ENCODE measurements at regions of chr10 and their contacts with region 1.

Region 1: DNA sequence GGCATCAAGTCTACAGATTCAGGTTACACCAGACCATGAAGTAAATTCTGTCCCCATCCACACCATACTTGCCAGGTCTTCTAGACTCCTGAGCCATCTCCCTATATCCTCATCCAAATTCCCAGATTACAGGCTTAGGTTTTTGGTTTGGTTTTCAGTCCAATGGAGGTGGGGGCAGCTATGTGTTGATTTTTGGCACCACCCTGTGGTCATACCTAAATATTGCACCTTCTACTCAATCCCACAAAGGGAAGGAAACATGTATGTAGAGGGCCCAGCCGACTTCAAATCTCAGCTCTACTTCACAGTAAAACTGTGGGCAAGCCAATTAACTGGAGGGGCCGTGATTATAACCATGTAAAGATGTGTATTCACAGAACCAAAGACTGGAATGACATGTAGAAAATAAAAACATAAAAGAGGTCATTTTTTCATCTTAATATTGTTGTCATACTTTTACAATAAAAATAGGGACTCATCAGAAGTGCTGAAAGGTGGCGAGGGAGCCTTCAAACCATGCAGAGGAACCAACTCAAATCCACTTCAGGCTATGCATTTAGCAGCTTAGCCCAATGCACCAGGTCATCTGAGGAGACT is 19.8 kb downstream of the ERCC6 start:
- DNase-seq: peak in 1 of 2 donors; percentile 19
- ATAC-seq: peak in 7 of 8 donors; percentile 46 to 82 (median 66)
- H3K4me3 ChIP-seq: no peak overlapping the region
- H3K27ac ChIP-seq: no peak overlapping the region
- H3K4me1 ChIP-seq: peaks cover 0 to 30% (median 18%) of the 10 kb centered on the region in 9 donors
- H3K27me3 ChIP-seq: no peaks in the 10 kb centered on the region
- CTCF ChIP-seq: peak; percentile 51 to 75 (median 65)

Region 2: DNA sequence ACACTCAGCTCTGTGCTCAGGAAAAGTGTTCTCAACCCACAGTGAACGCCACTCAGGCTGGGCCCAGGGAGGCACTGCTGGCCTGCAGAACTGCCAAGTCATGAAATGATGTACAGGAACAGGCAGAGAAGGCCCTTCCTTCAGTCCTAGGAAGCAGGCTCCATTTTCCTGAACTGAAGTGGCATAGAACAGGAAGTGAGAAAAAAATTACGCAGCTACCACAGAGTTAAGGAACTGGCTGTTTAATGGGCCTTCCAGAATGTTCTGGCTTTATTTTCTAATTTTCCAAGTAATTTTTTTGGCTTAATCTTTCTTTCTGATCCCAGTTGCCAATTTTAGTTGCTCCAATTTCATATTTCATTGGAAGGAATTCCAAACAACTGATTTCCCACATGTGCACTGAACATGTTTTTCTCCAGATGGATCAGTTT is 618.7 kb before region 1 on chr10:
- intact Hi-C with region 1: loop called in 1 of 10 experiments (anchors 10 kb)
- DNase-seq: no peak
- ATAC-seq: peak in 7 of 8 donors; percentile 40 to 65 (median 53)
- H3K4me3 ChIP-seq: no peak overlapping the region
- H3K27ac ChIP-seq: peak overlapping the region in 8 of 10 donors; percentile 29 to 73 (median 52)
- H3K4me1 ChIP-seq: peaks cover 0 to 19% (median 12%) of the 10 kb centered on the region in 9 donors
- H3K27me3 ChIP-seq: no peaks in the 10 kb centered on the region
- CTCF ChIP-seq: no peak

Region 3: GRCh38 chr10:49037187-49037586 is 481.9 kb before region 1 on chr10:
- intact Hi-C with region 1: no loop called
- DNase-seq: no peak
- ATAC-seq: no peak
- H3K4me3 ChIP-seq: no peak overlapping the region
- H3K27ac ChIP-seq: no peak overlapping the region
- H3K4me1 ChIP-seq: peaks cover 0 to 15% (median 0%) of the 10 kb centered on the region in 9 donors
- H3K27me3 ChIP-seq: no peaks in the 10 kb centered on the region
- CTCF ChIP-seq: no peak

Region 4: GRCh38 chr10:49726593-49726992 is 207.5 kb after region 1 on chr10:
- intact Hi-C with region 1: no loop called
- DNase-seq: no peak
- ATAC-seq: no peak
- H3K4me3 ChIP-seq: no peak overlapping the region
- H3K27ac ChIP-seq: no peak overlapping the region
- H3K4me1 ChIP-seq: no peaks in the 10 kb centered on the region
- H3K27me3 ChIP-seq: no peaks in the 10 kb centered on the region
- CTCF ChIP-seq: no peak

Measured in heart right ventricle (tissue), 16 donors.